ENCODE measurements at regions of chr12 and their contacts with region 1.

Region 1: GRCh38 chr12:2812290-2813213 is at the start of gene ITFG2:
- DNase-seq: peak; percentile 98
- ATAC-seq: peak; percentile 96
- H3K4me3 Mint-ChIP-seq: peak within 1 kb of the TSS; percentile 92
- H3K27ac Mint-ChIP-seq: peak within 1 kb of the TSS; percentile 98
- H3K4me1 Mint-ChIP-seq: peaks cover 26% of the 10 kb centered on the region
- H3K27me3 Mint-ChIP-seq: no peaks in the 10 kb centered on the region
- total RNA-seq, gene ITFG2: 28.0 to 35.3 TPM

Region 2: DNA sequence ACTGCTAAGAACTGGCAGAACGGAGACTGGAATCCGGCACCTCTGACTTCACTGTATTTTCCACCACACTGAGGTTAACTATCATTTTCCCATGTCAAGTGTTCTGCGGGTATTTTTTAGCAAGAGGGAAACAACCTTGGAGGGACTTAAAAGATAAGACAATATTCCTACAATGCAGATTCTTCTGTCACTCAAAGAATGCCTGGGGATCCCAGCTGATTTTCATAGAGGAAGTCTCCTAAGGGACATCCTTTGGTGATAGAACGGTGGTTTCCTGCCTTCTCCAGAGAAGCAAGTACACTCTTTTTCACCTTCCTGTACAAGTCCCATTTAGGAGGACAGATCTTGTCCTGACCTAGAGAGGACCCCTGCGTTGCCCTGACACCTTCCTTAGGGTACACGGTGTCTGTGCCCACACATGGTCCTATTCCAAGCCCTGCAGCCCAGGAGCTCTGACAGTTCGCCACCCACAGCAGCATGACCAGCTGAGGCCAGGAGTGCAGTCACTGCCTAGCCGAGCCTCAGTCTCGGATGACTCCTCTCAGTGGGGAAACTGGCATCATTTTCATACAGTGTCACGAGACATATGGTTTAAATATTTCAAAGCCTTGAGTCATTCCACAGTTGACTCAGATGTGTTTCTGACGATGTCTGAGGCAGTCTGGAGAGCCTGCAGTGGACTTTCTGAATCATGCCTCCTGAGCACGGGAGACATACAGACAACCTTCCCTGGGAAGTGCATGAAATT is 199.1 kb before region 1 on chr12:
- CTCF ChIA-PET with region 1: no interaction called
- POLR2A ChIA-PET with region 1: no interaction called
- intact Hi-C with region 1: loop called in 1 of 2 experiments (anchors 1 kb)
- DNase-seq: peak; percentile 78
- ATAC-seq: peak; percentile 99
- H3K4me3 Mint-ChIP-seq: no peak overlapping the region
- H3K27ac Mint-ChIP-seq: no peak overlapping the region
- H3K4me1 Mint-ChIP-seq: peaks cover 13% of the 10 kb centered on the region
- H3K27me3 Mint-ChIP-seq: peaks cover 36% of the 10 kb centered on the region

Region 3: DNA sequence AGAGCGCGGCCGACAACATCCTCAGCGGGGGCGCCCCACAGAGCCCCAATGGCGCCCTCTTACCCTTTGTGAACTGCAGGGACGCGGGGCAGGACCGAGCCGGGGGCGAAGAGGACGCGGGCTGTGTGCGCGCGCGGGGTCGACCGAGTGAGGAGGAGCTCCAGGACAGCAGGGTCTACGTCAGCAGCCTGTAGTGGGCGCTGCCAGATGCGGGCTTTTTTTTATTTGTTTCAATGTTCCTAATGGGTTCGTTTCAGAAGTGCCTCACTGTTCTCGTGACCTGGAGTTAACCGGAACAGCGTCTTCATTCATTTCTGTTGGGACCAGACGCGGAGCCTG is 121.6 kb before region 1 on chr12:
- CTCF ChIA-PET with region 1: interaction called, 3 read pairs
- POLR2A ChIA-PET with region 1: no interaction called
- intact Hi-C with region 1: loop called (anchors 1 kb)
- DNase-seq: peak; percentile 76
- ATAC-seq: peak; percentile 66
- H3K4me3 Mint-ChIP-seq: peak overlapping the region; percentile 79
- H3K27ac Mint-ChIP-seq: peak overlapping the region; percentile 79
- H3K4me1 Mint-ChIP-seq: peaks cover 26% of the 10 kb centered on the region
- H3K27me3 Mint-ChIP-seq: peaks cover 5% of the 10 kb centered on the region

Region 4: DNA sequence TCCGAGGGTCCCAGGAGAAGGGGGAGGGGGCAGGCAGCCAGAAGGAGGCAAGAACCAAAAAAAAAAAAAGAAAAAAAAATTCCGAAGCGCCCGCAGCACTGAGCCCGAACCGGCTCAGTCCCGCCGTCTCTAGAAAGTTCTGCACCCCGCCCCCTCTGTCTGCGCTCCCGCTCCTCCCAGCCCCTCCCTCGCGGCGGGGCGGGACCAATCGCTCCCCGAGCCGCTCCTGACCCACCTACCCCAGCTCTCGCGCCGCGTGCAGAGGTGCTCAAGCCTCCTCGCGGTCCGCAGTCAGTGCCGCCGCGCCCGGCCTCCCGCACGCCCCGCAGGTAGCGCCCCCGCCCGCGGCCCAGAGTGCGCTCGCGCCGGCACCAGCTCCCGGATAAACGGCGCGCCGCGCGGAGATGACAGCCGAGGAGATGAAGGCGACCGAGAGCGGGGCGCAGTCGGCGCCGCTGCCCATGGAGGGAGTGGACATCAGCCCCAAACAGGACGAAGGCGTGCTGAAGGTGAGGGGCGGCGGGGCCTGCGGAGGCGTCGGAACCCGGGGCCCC is 17.7 kb before region 1 on chr12 and contains the start of gene FKBP4:
- CTCF ChIA-PET with region 1: interaction called, 3 read pairs
- POLR2A ChIA-PET with region 1: interaction called, 3 read pairs
- intact Hi-C with region 1: loop called (anchors 1 kb)
- DNase-seq: peak; percentile 95
- ATAC-seq: peak; percentile 90
- H3K4me3 Mint-ChIP-seq: peak within 1 kb of the TSS; percentile 90
- H3K27ac Mint-ChIP-seq: peak within 1 kb of the TSS; percentile 67
- H3K4me1 Mint-ChIP-seq: peaks cover 20% of the 10 kb centered on the region
- H3K27me3 Mint-ChIP-seq: no peaks in the 10 kb centered on the region
- total RNA-seq, gene FKBP4: 129 to 182 TPM

Region 5: GRCh38 chr12:2845280-2845679 is 32.7 kb after region 1 on chr12:
- CTCF ChIA-PET with region 1: no interaction called
- POLR2A ChIA-PET with region 1: no interaction called
- intact Hi-C with region 1: no loop called
- DNase-seq: no peak
- ATAC-seq: no peak
- H3K4me3 Mint-ChIP-seq: no peak overlapping the region
- H3K27ac Mint-ChIP-seq: no peak overlapping the region
- H3K4me1 Mint-ChIP-seq: no peaks in the 10 kb centered on the region
- H3K27me3 Mint-ChIP-seq: no peaks in the 10 kb centered on the region

Region 6: DNA sequence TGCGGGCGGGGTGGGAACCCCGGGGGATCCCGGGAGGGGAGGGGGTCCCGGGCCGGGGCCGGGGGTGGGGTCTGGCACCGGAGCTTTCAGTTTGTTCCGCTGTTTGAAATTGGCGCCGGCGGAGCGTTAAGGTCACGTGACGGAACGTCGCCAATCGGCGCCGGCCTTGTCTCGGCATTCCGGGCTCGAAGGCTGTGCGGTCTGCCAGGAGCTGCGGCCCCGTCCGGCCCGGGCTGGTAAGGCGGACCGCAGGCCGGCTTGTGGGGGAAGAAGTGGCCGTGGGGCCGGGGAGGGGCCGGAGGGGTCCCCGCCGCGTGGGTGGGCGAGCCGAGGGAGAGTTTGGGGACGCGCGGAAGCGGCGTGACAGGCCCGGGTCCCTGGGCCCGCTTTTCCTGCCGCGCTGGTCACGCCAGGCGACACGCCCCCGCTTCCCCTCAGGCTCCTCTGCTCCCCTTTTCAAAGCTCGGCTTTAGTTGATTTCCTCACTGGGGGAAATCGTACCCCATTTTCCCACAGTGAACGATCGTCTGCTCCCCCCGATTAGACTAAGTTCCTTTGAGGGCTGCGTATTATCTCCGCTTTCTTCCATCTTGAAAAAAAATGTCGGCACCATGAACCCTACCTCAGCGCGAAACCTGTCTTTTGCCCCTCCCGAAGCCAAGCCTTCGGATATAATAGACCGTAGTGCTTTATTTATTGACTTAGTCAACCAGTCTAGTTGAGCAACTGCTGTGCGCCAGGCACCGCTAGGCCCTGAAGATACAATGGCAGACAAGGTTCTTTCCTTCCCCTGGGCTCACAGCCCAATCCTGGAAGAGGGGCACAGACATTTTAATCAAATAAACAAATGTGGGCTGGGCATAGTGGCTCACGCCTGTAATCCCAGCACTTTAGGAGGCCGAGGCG is 64.7 kb after region 1 on chr12 and contains the starts of genes FOXM1 and RHNO1:
- CTCF ChIA-PET with region 1: no interaction called
- POLR2A ChIA-PET with region 1: no interaction called
- intact Hi-C with region 1: loop called (anchors 1 kb)
- DNase-seq: peak; percentile 92
- ATAC-seq: peak; percentile 77
- H3K4me3 Mint-ChIP-seq: peak within 1 kb of the TSS; percentile 99
- H3K27ac Mint-ChIP-seq: peak within 1 kb of the TSS; percentile 99
- H3K4me1 Mint-ChIP-seq: peaks cover 31% of the 10 kb centered on the region
- H3K27me3 Mint-ChIP-seq: no peaks in the 10 kb centered on the region
- total RNA-seq, gene FOXM1: 74.5 to 92.3 TPM
- total RNA-seq, gene RHNO1: 61.1 to 91.4 TPM

Region 7: GRCh38 chr12:3752741-3753486 is 940.4 kb after region 1 on chr12 and contains the start of gene CRACR2A:
- CTCF ChIA-PET with region 1: no interaction called
- POLR2A ChIA-PET with region 1: no interaction called
- intact Hi-C with region 1: loop called in 1 of 2 experiments (anchors 2 kb)
- DNase-seq: peak; percentile 92
- ATAC-seq: peak; percentile 84
- H3K4me3 Mint-ChIP-seq: peak within 1 kb of the TSS; percentile 86
- H3K27ac Mint-ChIP-seq: peak within 1 kb of the TSS; percentile 96
- H3K4me1 Mint-ChIP-seq: peaks cover 52% of the 10 kb centered on the region
- H3K27me3 Mint-ChIP-seq: no peaks in the 10 kb centered on the region
- total RNA-seq, gene CRACR2A: 19.2 to 22.5 TPM